MCF 10A (cell line): ENCODE measurements at regions of chr15 and their contacts with region 1.

Region 1: DNA sequence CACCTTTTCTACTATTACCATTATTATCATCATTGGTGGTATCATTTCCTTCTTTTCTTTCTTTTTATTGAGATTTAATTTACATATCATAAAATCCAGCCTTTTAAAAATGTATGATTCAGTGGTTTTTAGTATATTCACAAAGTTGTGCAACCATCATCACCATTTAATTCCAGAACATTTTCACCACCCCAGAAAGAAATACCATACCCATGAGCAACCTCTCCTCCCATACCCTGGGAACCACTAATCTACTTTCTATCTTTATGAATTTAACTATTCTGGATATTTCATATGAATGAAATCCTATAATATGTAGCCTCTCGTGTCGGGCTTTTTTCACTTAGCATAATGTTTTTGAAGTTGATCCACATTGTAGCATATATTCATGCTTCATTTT is 29.1 kb downstream of the AAGAB start:
- DNase-seq: peak; percentile 52
- H3K4me3 Mint-ChIP-seq: peak overlapping the region; percentile 35
- H3K27ac Mint-ChIP-seq: no peak overlapping the region
- H3K4me1 Mint-ChIP-seq: peaks cover 13% of the 10 kb centered on the region
- H3K27me3 Mint-ChIP-seq: no peaks in the 10 kb centered on the region
- CTCF ChIP-seq: no peak

Region 2: DNA sequence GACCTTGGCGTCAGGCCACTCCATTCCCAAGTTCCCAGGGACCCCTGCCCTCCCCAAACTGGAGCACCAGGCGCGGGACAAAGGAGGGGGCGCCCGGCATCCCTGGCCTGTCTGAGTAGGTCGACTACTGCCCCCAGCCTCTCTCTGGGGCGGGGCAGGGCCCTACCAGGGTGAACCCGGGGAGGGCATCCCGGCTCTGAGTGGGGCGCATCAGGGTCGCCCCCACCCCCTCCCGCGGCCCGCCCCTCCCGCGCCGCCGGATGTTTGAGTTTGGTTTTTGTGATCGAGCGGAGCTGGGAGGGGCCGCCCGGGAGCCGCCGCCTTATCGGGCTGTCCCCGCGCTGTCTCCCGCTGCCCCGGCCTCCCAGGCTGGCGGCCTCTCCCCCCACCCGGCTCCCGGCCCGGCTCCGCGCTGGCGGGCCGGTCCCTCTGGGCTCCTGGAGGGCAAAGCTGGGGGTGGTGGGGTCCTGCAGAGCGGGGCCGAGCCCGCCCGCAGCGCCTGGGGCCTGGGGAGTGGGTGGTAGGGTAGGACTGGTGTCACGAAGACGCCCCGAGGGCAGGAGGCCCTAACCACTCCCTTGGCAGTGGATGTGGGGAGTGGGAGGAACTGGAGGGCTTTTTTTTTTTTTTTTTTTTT is 570.5 kb before region 1 on chr15:
- CTCF ChIA-PET with region 1: no interaction called
- POLR2A ChIA-PET with region 1: no interaction called
- intact Hi-C with region 1: no loop called
- DNase-seq: no peak
- H3K4me3 Mint-ChIP-seq: no peak overlapping the region
- H3K27ac Mint-ChIP-seq: no peak overlapping the region
- H3K4me1 Mint-ChIP-seq: no peaks in the 10 kb centered on the region
- H3K27me3 Mint-ChIP-seq: no peaks in the 10 kb centered on the region
- CTCF ChIP-seq: no peak

Region 3: DNA sequence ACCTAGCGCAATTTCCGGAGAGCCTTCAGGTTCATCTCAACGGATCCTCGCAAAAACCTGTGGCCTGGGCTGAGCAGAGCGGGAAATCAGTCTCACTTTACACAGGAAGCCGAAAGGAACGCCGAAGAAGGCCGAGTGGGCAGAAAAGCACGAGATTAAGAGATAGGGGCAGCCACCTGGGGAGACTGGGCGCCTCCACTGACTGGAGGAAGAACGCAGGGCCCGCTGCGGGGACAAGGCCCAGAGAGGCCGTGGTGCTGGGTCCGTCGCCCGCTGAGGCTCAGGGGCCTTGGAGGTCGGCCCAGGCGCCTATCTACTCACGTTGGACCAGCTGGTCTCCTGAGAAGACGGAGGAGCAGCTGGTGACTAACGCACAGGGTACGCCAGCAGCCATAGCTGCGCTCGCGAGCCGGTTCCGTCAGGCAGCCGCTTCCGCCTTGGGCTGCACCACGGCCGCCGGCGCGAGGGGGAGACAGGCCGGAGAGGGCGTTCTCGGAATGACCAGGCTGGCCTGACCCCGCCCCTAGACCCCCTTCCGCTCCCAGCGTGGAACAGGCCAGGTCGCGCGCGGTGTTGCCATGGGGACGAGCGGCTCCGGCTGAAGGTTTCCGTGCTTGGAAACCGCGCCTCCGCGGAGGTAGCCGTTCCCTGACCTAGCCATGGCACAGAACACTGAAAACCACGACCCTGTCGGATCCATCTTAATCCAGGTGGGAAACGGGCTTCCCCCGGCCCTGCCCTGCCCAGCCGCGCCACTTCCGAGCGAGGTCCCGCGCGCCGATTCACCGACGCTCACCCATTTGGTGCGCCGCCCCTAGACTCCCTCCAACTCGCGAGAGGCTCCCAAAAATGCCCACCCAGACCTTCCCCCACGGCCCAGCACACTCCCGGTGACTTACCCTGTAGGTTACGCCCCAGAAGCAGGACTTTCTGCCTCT is 29.2 kb after region 1 on chr15 and contains the starts of genes AAGAB and IQCH:
- CTCF ChIA-PET with region 1: interaction called, 3 read pairs
- POLR2A ChIA-PET with region 1: interaction called, 15 read pairs
- intact Hi-C with region 1: no loop called
- DNase-seq: peak; percentile 96
- H3K4me3 Mint-ChIP-seq: peak within 1 kb of the TSS; percentile 97
- H3K27ac Mint-ChIP-seq: peak within 1 kb of the TSS; percentile 99
- H3K4me1 Mint-ChIP-seq: peaks cover 19% of the 10 kb centered on the region
- H3K27me3 Mint-ChIP-seq: no peaks in the 10 kb centered on the region
- CTCF ChIP-seq: no peak
- total RNA-seq, gene AAGAB: 52.7 and 60.7 TPM in 2 replicates
- total RNA-seq, gene IQCH: 4.4 and 5.0 TPM in 2 replicates